ENCODE measurements at regions of chr14 and their contacts with region 1.

Region 1: DNA sequence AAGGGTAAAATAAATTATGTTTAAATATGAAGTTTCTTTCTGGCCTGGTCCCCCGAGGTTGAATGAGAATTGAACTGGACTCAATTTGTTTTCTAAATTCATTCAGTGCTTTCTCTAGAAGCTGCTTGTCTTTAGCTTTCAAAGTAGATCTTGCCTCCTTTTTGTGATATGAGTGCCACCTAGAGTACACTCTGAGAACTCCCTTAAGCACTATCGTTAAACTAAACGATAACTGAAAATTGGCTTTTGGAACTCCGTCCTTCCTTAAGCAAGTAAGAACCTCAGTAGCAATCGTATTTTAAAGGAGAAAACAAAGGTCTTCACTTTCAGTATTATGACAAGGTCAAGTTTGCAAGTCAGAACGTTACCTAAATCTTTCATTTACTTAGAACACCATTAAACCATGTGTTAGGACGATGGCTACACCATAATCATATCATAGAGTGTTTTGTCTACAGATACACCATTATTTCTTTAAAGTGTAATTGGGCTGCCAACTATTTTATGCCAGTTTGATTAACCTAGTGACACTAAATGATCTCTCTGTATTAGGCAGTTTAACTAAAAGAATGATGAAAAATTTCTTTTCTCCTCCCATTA is 364.8 kb downstream of the SNAPC1 start:
- DNase-seq: no peak
- ATAC-seq: peak; percentile 88
- H3K4me3 Mint-ChIP-seq: no peak overlapping the region
- H3K27ac Mint-ChIP-seq: peak overlapping the region; percentile 41
- H3K4me1 Mint-ChIP-seq: peaks cover 38% of the 10 kb centered on the region
- H3K27me3 Mint-ChIP-seq: peaks cover 2% of the 10 kb centered on the region
- CTCF ChIP-seq: peak; percentile 91

Region 2: DNA sequence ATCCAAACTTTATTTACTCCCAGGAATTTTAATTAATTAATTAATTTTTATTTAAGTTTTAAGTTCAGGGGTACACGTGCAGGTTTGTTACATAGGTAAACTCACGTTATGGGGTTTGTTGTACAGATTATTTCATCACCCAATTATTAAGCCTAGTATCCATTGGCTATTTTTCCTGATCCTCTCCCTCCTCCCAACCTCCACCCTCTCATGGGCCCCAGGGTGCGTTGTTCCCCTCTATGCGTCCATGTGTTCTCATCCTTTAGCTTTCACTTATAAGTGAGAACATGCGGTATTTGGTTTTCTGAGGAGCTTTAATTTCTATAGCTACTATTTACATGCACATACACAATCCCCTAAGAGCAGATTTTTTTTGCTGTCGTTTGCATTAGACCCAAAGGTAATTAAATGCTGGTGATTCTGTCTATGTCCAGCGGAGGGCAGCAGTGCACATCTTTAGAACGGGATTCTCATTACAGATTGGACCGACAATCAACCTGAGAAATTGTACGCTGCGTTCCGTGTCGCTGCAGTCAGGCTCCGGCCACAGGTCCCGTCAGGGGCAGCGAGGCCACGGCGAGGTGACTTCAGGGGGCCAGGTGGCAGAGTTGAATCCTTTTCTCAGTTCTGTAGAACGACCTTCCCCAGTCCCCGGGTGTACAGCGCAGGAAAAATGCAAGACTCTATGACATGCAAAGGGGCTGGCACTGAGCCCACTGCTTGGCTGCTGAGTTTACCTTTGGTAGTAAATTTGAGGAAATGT is 857.5 kb before region 1 on chr14:
- CTCF ChIA-PET with region 1: interaction called, 5 read pairs
- POLR2A ChIA-PET with region 1: no interaction called
- intact Hi-C with region 1: loop called (anchors 2 kb)
- DNase-seq: peak; percentile 37
- ATAC-seq: peak; percentile 79
- H3K4me3 Mint-ChIP-seq: peak overlapping the region; percentile 50
- H3K27ac Mint-ChIP-seq: no peak overlapping the region
- H3K4me1 Mint-ChIP-seq: peaks cover 2% of the 10 kb centered on the region
- H3K27me3 Mint-ChIP-seq: peaks cover 51% of the 10 kb centered on the region
- CTCF ChIP-seq: peak; percentile 93

Region 3: DNA sequence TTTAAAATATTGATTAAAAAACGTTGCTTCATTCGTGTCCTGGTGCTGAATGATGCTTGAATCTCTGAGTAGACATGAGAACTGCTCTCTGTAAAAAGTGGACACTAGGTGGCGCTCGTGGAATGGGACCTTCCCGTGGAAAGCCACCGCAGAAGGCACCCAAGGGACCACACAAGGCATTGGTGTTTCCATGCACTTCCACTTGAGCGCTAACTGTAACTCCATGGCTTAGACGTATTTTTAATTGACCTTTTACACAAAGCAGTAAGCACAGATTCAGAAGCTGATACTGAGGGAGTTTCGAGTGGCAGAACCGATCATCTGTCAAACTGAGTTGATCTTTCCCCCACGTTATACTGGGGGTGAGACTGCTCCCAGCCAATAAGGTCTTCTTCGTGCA is 670.3 kb before region 1 on chr14:
- CTCF ChIA-PET with region 1: interaction called, 7 read pairs
- POLR2A ChIA-PET with region 1: no interaction called
- intact Hi-C with region 1: loop called (anchors 1 kb)
- DNase-seq: peak; percentile 55
- ATAC-seq: peak; percentile 89
- H3K4me3 Mint-ChIP-seq: no peak overlapping the region
- H3K27ac Mint-ChIP-seq: no peak overlapping the region
- H3K4me1 Mint-ChIP-seq: peaks cover 9% of the 10 kb centered on the region
- H3K27me3 Mint-ChIP-seq: no peaks in the 10 kb centered on the region
- CTCF ChIP-seq: no peak

Region 4: GRCh38 chr14:61620130-61620946 is 506.6 kb before region 1 on chr14:
- CTCF ChIA-PET with region 1: no interaction called
- POLR2A ChIA-PET with region 1: no interaction called
- intact Hi-C with region 1: no loop called
- DNase-seq: no peak
- ATAC-seq: no peak
- H3K4me3 Mint-ChIP-seq: no peak overlapping the region
- H3K27ac Mint-ChIP-seq: no peak overlapping the region
- H3K4me1 Mint-ChIP-seq: peaks cover 6% of the 10 kb centered on the region
- H3K27me3 Mint-ChIP-seq: no peaks in the 10 kb centered on the region
- CTCF ChIP-seq: no peak

Region 5: DNA sequence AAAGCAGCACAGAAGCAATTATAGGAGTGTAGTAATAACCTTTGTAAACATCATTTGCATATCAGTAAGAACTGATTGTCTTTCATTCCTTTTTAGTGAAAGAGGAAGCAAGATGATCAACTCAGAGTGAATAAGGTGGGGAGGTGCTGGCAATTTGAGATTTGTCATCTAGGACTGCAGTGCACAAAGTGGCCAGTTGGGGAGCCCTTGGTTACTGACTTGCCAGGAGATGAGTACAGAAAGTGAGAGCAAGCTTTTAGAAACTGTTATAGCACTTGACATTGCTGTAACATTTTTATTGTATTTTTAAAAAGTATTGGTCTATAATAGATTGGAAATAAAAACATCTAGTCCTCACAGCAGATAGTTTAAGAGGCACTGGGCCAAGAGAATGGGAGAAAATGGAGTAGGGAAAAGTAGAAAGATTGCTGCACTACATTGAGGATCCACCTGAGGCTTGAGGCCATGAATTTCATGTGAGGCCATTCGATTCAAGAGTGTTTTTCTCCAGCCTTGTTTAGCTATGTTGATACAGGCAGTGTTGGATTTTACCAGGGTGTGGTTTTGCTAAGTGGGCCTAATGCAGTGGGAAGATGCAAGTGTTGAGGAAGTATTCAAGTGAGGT is 266.6 kb before region 1 on chr14:
- CTCF ChIA-PET with region 1: interaction called, 22 read pairs
- POLR2A ChIA-PET with region 1: no interaction called
- intact Hi-C with region 1: loop called (anchors 1 kb)
- DNase-seq: peak; percentile 53
- ATAC-seq: peak; percentile 100
- H3K4me3 Mint-ChIP-seq: no peak overlapping the region
- H3K27ac Mint-ChIP-seq: no peak overlapping the region
- H3K4me1 Mint-ChIP-seq: peaks cover 6% of the 10 kb centered on the region
- H3K27me3 Mint-ChIP-seq: peaks cover 4% of the 10 kb centered on the region
- CTCF ChIP-seq: peak; percentile 25

Region 6: DNA sequence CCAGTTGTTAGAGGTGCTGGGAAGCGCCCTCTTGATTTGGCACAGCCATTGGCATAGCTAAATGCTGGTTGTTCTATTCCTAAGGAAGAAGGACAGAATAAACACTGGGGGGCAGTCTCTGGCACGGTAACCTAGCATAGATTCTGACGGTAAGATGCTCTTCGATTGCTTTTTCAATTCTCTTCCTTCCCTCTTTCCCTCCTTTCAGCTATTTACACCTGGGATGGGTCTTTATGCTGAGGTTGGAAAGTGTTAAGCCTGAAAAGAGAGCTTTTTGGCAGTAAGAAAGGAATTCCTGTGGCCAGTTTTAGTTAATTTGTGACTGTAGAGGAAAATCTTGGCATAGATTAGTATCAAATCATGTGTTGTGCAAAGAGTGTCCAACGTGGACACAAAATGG is 201.9 kb before region 1 on chr14:
- CTCF ChIA-PET with region 1: interaction called, 324 read pairs
- POLR2A ChIA-PET with region 1: interaction called, 8 read pairs
- intact Hi-C with region 1: loop called (anchors 1 kb)
- DNase-seq: no peak
- ATAC-seq: peak; percentile 70
- H3K4me3 Mint-ChIP-seq: peak overlapping the region; percentile 21
- H3K27ac Mint-ChIP-seq: no peak overlapping the region
- H3K4me1 Mint-ChIP-seq: peaks cover 20% of the 10 kb centered on the region
- H3K27me3 Mint-ChIP-seq: no peaks in the 10 kb centered on the region
- CTCF ChIP-seq: peak; percentile 45

Region 7: GRCh38 chr14:62053188-62053587 is 73.8 kb before region 1 on chr14:
- CTCF ChIA-PET with region 1: no interaction called
- POLR2A ChIA-PET with region 1: no interaction called
- intact Hi-C with region 1: no loop called
- DNase-seq: no peak
- ATAC-seq: no peak
- H3K4me3 Mint-ChIP-seq: no peak overlapping the region
- H3K27ac Mint-ChIP-seq: no peak overlapping the region
- H3K4me1 Mint-ChIP-seq: no peaks in the 10 kb centered on the region
- H3K27me3 Mint-ChIP-seq: no peaks in the 10 kb centered on the region
- CTCF ChIP-seq: no peak

Measured in activated B cell treated with CpG ODN at 0.5 μM for 24 hours (primary cell).